Activated naive CD4-positive, alpha-beta T cell treated with anti-CD3 and anti-CD28 coated beads for 36 hours (primary cell): ENCODE measurements at regions of chr14 and their contacts with region 1.

Region 1: GRCh38 chr14:74493343-74494261 is at the start of gene ISCA2:
- DNase-seq: peak; percentile 100
- H3K4me3 Mint-ChIP-seq: no peak within 1 kb of the TSS
- H3K27ac Mint-ChIP-seq: peak within 1 kb of the TSS; percentile 86
- H3K4me1 Mint-ChIP-seq: peaks cover 25% of the 10 kb centered on the region
- H3K27me3 Mint-ChIP-seq: no peaks in the 10 kb centered on the region
- total RNA-seq, gene ISCA2: 27.7 to 30.9 TPM

Region 2: GRCh38 chr14:73886449-73887317 is 606.9 kb before region 1 on chr14 and contains the start of gene ZNF410:
- CTCF ChIA-PET with region 1: no interaction called
- intact Hi-C with region 1: loop called (anchors 2 kb)
- DNase-seq: peak; percentile 95
- H3K4me3 Mint-ChIP-seq: peak within 1 kb of the TSS; percentile 88
- H3K27ac Mint-ChIP-seq: peak within 1 kb of the TSS; percentile 94
- H3K4me1 Mint-ChIP-seq: peaks cover 46% of the 10 kb centered on the region
- H3K27me3 Mint-ChIP-seq: no peaks in the 10 kb centered on the region
- total RNA-seq, gene ZNF410: 51.0 to 56.8 TPM

Region 3: DNA sequence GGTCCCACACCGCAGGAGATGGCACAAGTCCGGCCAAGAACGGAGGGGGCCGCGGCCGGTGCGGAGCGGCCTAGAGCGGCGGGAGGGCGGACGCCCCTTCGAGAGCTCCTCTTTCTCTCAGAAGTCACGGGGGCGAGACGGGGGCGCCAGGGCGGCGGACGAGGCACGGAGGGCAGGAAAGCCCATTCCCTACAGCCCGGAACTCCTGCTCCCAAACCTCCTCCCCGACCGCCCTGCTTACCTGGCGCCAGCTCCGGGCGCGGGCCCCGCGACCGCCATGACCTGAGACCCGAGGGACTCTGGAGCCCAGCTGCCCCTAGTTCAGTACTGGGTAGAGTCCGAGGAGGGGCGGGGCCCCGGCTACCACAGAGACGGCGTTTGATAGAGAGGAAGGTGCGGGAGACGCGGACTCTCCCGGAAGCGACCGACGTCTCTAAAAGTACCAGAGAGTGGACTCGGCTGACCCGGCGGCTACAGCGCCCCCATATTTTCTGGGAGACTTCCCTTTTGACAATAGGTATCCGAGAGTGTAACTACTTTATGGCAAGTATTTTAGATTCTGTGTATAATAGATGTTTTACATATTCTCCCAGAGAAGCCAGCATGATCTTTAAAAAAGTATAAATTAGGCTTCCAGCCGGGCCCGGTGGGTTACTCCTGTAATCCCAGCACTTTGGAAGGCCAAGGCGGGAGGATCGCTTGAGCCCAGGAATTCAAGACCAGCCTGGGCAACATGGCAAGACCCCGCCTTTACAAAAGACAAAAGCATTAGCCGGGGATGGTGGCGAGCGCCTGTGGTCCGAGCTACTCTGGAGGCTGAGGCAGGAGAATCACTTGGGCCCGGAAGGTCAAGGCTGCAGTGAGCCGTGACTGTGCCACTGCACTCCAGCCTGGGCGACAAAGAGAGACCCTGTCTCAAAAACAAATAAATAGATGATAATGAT is 190.7 kb before region 1 on chr14 and contains the start of gene ABCD4:
- CTCF ChIA-PET with region 1: no interaction called
- intact Hi-C with region 1: loop called (anchors 1 kb)
- DNase-seq: peak; percentile 92
- H3K4me3 Mint-ChIP-seq: peak within 1 kb of the TSS; percentile 97
- H3K27ac Mint-ChIP-seq: peak within 1 kb of the TSS; percentile 92
- H3K4me1 Mint-ChIP-seq: peaks cover 26% of the 10 kb centered on the region
- H3K27me3 Mint-ChIP-seq: no peaks in the 10 kb centered on the region
- total RNA-seq, gene ABCD4: 41.4 to 43.9 TPM

Region 4: GRCh38 chr14:74401504-74402241 is 91.9 kb before region 1 on chr14:
- CTCF ChIA-PET with region 1: interaction called, 3 read pairs
- intact Hi-C with region 1: loop called (anchors 1 kb)
- DNase-seq: peak; percentile 83
- H3K4me3 Mint-ChIP-seq: peak overlapping the region; percentile 44
- H3K27ac Mint-ChIP-seq: peak overlapping the region; percentile 43
- H3K4me1 Mint-ChIP-seq: peaks cover 16% of the 10 kb centered on the region
- H3K27me3 Mint-ChIP-seq: no peaks in the 10 kb centered on the region

Region 5: DNA sequence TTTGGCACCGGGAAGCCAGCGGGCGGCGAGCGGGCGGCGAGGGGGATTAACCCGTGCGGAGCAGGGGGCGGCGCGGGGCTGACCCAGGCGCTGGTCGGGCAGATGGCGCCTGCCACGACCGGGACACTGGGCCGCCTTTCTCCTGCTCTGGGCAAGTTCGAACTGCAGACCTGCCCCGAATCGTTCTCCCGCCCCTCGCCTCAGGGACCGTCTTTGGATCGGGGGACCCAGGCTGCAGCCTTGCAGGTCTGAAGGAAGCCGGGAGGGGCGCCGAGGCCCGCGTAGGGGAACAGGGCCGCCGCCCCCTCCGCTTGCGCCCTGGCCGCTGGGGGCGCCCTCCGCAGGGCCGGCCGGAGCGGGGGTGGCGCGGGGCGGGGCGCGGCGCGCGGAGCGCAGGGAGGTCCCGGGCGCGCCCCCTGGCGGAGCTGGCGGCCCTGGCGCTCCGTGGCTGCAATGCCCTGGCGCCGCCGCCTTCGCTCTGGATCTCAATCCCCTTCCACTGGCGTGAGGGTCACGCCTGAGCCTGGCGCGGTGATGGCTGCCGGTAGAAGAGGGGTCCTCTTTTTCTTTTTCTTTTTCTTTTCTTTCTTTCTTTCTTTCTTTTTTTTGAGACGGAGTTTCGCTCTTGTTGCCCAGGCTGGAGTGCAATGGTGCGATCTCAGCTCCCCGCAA is 118.9 kb after region 1 on chr14:
- CTCF ChIA-PET with region 1: interaction called, 4 read pairs
- intact Hi-C with region 1: loop called (anchors 1 kb)
- DNase-seq: peak; percentile 77
- H3K4me3 Mint-ChIP-seq: peak overlapping the region; percentile 62
- H3K27ac Mint-ChIP-seq: no peak overlapping the region
- H3K4me1 Mint-ChIP-seq: peaks cover 40% of the 10 kb centered on the region
- H3K27me3 Mint-ChIP-seq: peaks cover 14% of the 10 kb centered on the region

Region 6: GRCh38 chr14:74881431-74882361 is 388.1 kb after region 1 on chr14 and contains the start of gene DLST:
- CTCF ChIA-PET with region 1: no interaction called
- intact Hi-C with region 1: loop called (anchors 5 kb)
- DNase-seq: peak; percentile 87
- H3K4me3 Mint-ChIP-seq: peak within 1 kb of the TSS; percentile 91
- H3K27ac Mint-ChIP-seq: peak within 1 kb of the TSS; percentile 94
- H3K4me1 Mint-ChIP-seq: peaks cover 63% of the 10 kb centered on the region
- H3K27me3 Mint-ChIP-seq: no peaks in the 10 kb centered on the region
- total RNA-seq, gene DLST: 126 to 132 TPM